ENCODE measurements at regions of chr10 and their contacts with region 1.

Region 1: DNA sequence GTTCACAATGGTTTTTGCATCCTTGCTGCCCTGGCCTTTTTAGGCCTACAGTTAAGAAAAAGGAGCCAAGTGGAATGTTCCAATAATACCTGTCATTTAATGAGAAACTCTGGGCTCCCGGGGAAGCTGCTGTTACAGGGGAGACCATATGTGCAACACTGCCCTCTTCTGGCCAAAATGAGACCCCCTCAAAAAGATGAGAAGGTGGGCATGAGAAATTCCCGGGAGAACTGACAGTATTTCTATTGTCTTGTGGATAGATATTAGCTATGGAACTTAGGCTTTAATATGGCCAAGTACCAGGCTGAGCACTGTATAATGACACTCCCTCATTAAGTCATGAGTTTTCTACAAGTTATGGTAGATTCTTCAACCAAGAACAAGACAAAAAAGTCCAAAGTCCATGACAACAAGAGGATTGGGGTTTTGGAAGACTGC is 99.4 kb downstream of the CCDC3 start:
- DNase-seq: no peak

Region 2: GRCh38 chr10:12264204-12264940 is 637.8 kb before region 1 on chr10:
- intact Hi-C with region 1: loop called (anchors 10 kb)
- DNase-seq: peak; percentile 92

Region 3: GRCh38 chr10:12782537-12782936 is 119.6 kb before region 1 on chr10:
- intact Hi-C with region 1: loop called (anchors 5 kb)
- DNase-seq: no peak

Region 4: DNA sequence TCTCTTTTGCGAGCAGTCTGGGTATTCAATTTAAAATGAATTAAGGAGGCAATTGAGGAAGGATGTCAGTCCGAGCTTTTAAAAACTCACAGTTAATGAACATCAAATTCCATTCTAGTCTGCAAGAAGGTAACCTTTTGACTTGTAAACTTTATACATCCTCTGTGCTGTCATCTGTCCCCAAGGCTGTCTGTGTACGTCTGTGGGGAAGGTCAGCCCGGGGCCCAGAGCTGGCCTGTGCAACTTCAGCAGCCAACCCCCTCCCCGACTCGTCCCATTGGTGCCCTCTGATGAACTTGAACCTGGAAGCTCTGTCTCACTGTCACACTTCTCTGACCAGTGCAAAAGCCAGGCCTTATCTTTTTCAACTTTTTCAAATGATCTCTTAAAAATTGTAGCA is 19.0 kb after region 1 on chr10:
- intact Hi-C with region 1: no loop called
- DNase-seq: no peak

Region 5: GRCh38 chr10:13074561-13075451 is 172.7 kb after region 1 on chr10:
- intact Hi-C with region 1: loop called (anchors 10 kb)
- DNase-seq: no peak